Caco-2 (cell line): ENCODE measurements at regions of chr4 and their contacts with region 1.

Region 1: DNA sequence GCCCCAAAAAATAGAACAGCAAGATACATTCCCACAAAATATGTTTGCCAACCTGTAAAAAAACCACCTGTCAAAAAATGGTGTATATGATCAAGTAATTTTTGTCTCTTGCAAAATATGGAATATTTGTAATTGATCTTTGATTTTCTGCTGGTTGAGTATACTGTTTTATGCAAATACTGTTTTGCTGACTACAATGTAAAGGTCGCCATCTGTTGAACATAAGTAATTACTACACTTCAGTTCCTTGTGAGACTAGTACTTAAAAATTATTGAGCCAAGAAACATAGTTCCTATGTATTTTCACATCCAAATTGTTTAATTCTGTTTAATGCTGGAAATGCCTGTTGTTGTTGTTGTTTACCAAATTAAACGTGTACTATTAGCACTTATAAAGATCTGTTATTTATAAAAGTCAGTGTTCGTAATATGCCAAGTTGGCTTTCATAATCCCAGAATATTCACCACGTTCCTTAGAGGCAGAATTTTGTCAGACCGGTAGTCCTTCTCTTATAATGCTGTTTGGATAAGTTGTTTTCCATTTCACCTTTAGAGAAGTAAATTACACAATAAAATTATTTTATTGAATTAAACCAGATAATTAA is 144.2 kb downstream of the PDLIM5 start:
- DNase-seq: peak in 1 of 2 experiments; percentile 22
- H3K4me3 ChIP-seq: no peak overlapping the region
- H3K4me3 Mint-ChIP-seq: no peak overlapping the region
- H3K27ac Mint-ChIP-seq: no peak overlapping the region
- H3K4me1 ChIP-seq: peaks cover 8% of the 10 kb centered on the region
- H3K4me1 Mint-ChIP-seq: no peaks in the 10 kb centered on the region
- H3K27me3 ChIP-seq: no peaks in the 10 kb centered on the region
- H3K27me3 Mint-ChIP-seq: no peaks in the 10 kb centered on the region
- CTCF ChIP-seq: peak; percentile 45 to 66

Region 2: GRCh38 chr4:94304365-94304971 is 291.5 kb before region 1 on chr4:
- CTCF ChIA-PET with region 1: no interaction called
- POLR2A ChIA-PET with region 1: no interaction called
- intact Hi-C with region 1: loop called (anchors 1 kb)
- DNase-seq: peak in 1 of 2 experiments; percentile 41
- H3K4me3 ChIP-seq: no peak overlapping the region
- H3K4me3 Mint-ChIP-seq: no peak overlapping the region
- H3K27ac Mint-ChIP-seq: no peak overlapping the region
- H3K4me1 ChIP-seq: peaks cover 49% of the 10 kb centered on the region
- H3K4me1 Mint-ChIP-seq: peaks cover 29% of the 10 kb centered on the region
- H3K27me3 ChIP-seq: no peaks in the 10 kb centered on the region
- H3K27me3 Mint-ChIP-seq: no peaks in the 10 kb centered on the region
- CTCF ChIP-seq: peak; percentile 52 to 62

Region 3: GRCh38 chr4:94332983-94333590 is 262.9 kb before region 1 on chr4:
- CTCF ChIA-PET with region 1: interaction called, 3 read pairs
- POLR2A ChIA-PET with region 1: no interaction called
- intact Hi-C with region 1: loop called (anchors 1 kb)
- DNase-seq: peak; percentile 50 to 51
- H3K4me3 ChIP-seq: no peak overlapping the region
- H3K4me3 Mint-ChIP-seq: peak overlapping the region; percentile 59
- H3K27ac Mint-ChIP-seq: peak overlapping the region; percentile 63
- H3K4me1 ChIP-seq: peaks cover 26% of the 10 kb centered on the region
- H3K4me1 Mint-ChIP-seq: peaks cover 18% of the 10 kb centered on the region
- H3K27me3 ChIP-seq: no peaks in the 10 kb centered on the region
- H3K27me3 Mint-ChIP-seq: no peaks in the 10 kb centered on the region
- CTCF ChIP-seq: peak; percentile 19 to 48

Region 4: GRCh38 chr4:94406668-94407437 is 189.1 kb before region 1 on chr4:
- CTCF ChIA-PET with region 1: interaction called, 6 read pairs
- POLR2A ChIA-PET with region 1: no interaction called
- intact Hi-C with region 1: loop called (anchors 1 kb)
- DNase-seq: peak; percentile 65 to 75
- H3K4me3 ChIP-seq: no peak overlapping the region
- H3K4me3 Mint-ChIP-seq: no peak overlapping the region
- H3K27ac Mint-ChIP-seq: no peak overlapping the region
- H3K4me1 ChIP-seq: peaks cover 9% of the 10 kb centered on the region
- H3K4me1 Mint-ChIP-seq: peaks cover 7% of the 10 kb centered on the region
- H3K27me3 ChIP-seq: no peaks in the 10 kb centered on the region
- H3K27me3 Mint-ChIP-seq: no peaks in the 10 kb centered on the region
- CTCF ChIP-seq: peak; percentile 76 to 82

Region 5: DNA sequence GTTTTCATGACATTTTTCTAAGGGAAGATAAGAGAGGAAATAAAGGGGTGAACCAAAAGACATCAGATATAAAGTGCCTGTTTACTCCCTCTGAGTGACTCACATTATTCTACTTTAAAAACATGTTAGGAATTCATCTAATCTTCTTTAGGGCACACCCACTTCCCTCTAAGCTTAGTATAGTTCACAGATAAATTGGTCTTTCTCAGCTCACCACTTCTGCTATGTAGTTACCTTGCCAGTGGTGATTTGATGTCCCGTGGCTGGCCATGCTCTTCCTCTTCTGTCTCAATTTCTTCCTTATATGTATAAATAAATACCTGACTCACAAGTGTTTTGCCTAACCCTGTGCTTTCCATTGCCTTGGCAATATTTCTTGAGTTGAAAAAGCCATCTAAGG is 47.4 kb before region 1 on chr4:
- CTCF ChIA-PET with region 1: no interaction called
- POLR2A ChIA-PET with region 1: no interaction called
- intact Hi-C with region 1: loop called (anchors 5 kb)
- DNase-seq: peak in 1 of 2 experiments; percentile 41
- H3K4me3 ChIP-seq: no peak overlapping the region
- H3K4me3 Mint-ChIP-seq: peak overlapping the region; percentile 17
- H3K27ac Mint-ChIP-seq: peak overlapping the region; percentile 89
- H3K4me1 ChIP-seq: peaks cover 83% of the 10 kb centered on the region
- H3K4me1 Mint-ChIP-seq: peaks cover 43% of the 10 kb centered on the region
- H3K27me3 ChIP-seq: no peaks in the 10 kb centered on the region
- H3K27me3 Mint-ChIP-seq: no peaks in the 10 kb centered on the region
- CTCF ChIP-seq: no peak

Region 6: DNA sequence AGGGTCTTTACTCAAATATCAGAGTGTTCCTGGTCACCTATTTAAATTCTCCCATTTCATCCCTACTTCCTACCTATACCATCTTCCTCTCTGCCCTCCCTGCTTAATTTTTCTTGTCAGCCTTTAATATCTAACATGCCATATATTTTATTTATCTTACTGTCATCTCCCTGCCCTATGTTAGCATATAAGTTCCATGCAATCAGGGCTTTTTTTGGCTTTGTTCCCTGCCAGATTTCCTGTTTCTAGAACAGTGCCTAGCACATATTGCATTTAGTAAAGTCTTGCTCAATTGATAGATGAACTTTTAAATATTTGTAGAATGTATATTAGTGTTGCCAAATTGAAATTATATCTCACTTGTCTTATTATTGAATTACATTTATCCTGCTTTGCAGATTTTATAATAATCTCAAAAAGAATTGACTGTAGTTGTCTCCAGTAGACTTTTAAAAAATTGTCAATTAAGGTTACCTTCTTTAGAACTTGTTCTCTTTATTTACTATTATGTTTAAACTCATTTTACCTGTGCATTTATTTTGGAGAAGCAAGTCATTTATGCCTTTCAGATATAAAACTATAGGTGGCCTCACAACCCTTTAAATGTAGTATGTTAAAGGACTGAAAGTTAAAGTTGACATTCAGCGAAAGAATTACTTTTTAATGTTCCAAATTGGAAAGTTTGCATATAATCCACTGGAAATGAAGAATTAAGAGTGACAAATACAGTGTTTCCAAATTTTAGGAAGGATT is 53.6 kb after region 1 on chr4:
- CTCF ChIA-PET with region 1: no interaction called
- POLR2A ChIA-PET with region 1: no interaction called
- intact Hi-C with region 1: no loop called
- DNase-seq: no peak
- H3K4me3 ChIP-seq: no peak overlapping the region
- H3K4me3 Mint-ChIP-seq: no peak overlapping the region
- H3K27ac Mint-ChIP-seq: no peak overlapping the region
- H3K4me1 ChIP-seq: peaks cover 15% of the 10 kb centered on the region
- H3K4me1 Mint-ChIP-seq: peaks cover 12% of the 10 kb centered on the region
- H3K27me3 ChIP-seq: no peaks in the 10 kb centered on the region
- H3K27me3 Mint-ChIP-seq: no peaks in the 10 kb centered on the region
- CTCF ChIP-seq: no peak

Region 7: GRCh38 chr4:94814237-94814636 is 218.3 kb after region 1 on chr4:
- CTCF ChIA-PET with region 1: no interaction called
- POLR2A ChIA-PET with region 1: no interaction called
- intact Hi-C with region 1: no loop called
- DNase-seq: no peak
- H3K4me3 ChIP-seq: no peak overlapping the region
- H3K4me3 Mint-ChIP-seq: no peak overlapping the region
- H3K27ac Mint-ChIP-seq: no peak overlapping the region
- H3K4me1 ChIP-seq: no peaks in the 10 kb centered on the region
- H3K4me1 Mint-ChIP-seq: no peaks in the 10 kb centered on the region
- H3K27me3 ChIP-seq: no peaks in the 10 kb centered on the region
- H3K27me3 Mint-ChIP-seq: peaks cover 3% of the 10 kb centered on the region
- CTCF ChIP-seq: no peak